ENCODE measurements at regions of chr1 and their contacts with region 1.

Region 1: DNA sequence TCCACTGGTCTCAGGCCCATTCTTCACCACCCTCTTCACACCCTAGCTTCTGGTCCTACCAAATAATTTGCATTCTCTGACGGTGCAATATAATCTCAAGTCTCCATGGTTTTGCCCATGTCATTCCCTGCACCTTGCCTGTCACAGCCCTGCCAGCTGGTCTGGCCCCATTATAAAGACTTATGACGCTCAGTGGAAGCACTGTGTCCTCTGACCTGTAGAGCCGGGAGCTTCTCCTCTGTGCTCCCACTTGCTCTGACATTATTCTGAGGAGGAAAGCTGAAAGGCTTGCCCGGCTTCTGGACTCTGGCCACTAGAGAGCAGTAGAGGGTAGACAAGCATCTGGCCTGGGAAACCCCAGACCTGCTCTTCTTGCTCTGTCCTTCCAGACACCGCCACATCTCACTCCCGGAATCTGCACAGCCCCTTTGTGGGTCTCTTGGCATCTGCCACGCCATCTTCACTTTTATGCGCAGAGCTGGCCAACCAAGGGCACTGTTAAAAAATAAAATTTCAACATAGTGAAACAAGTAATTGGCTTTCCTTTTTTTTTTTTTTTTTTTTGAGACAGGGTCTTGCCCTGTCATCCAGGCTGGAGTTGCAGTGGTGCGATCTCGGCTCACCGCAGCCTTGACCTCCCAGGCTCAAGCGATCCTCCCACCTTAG is 44.4 kb downstream of the NENF start:
- DNase-seq: peak; percentile 85 to 91
- H3K4me3 ChIP-seq: no peak overlapping the region
- H3K27ac ChIP-seq: no peak overlapping the region
- H3K4me1 ChIP-seq: peaks cover 0 to 28% (median 15%) of the 10 kb centered on the region in 4 donors
- H3K27me3 ChIP-seq: no peaks in the 10 kb centered on the region
- CTCF ChIP-seq: peak; percentile 83 to 89

Region 2: DNA sequence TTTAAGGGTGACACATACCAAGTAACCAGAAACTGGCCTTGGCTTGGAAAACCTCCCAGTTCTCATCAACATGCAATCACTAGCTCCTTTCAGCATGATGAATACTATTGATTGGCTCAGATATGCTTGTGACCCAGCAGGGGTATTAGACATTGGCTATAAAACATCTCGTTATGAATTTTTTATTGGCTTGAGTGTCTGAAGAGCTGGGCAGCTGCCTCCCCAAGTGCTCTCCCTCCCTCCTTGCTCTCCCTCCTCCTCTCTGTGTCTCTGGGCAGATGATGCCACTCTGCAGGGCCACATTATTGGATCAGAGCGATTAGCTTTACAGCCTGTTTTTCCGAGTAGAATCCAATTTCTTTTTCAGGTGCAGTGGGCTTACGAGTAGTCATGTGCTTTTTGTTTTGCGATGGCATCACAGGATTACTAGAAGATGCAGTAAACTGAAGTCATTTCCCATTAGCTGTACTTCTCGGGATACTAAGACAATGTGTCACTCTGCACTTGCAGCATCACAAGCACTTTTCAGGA is 52.1 kb after region 1 on chr1:
- intact Hi-C with region 1: no loop called
- DNase-seq: no peak
- H3K4me3 ChIP-seq: no peak overlapping the region
- H3K27ac ChIP-seq: no peak overlapping the region
- H3K4me1 ChIP-seq: no peaks in the 10 kb centered on the region
- H3K27me3 ChIP-seq: no peaks in the 10 kb centered on the region
- CTCF ChIP-seq: no peak

Region 3: GRCh38 chr1:212607206-212607912 is 130.2 kb after region 1 on chr1:
- intact Hi-C with region 1: loop called (anchors 10 kb)
- DNase-seq: peak; percentile 49 to 78
- H3K4me3 ChIP-seq: peak overlapping the region; percentile 65 to 84
- H3K27ac ChIP-seq: peak overlapping the region; percentile 91 to 99
- H3K4me1 ChIP-seq: peaks cover 0 to 56% (median 39%) of the 10 kb centered on the region in 4 donors
- H3K27me3 ChIP-seq: peaks cover 0 to 3% of the 10 kb centered on the region in 2 donors
- CTCF ChIP-seq: no peak

Region 4: DNA sequence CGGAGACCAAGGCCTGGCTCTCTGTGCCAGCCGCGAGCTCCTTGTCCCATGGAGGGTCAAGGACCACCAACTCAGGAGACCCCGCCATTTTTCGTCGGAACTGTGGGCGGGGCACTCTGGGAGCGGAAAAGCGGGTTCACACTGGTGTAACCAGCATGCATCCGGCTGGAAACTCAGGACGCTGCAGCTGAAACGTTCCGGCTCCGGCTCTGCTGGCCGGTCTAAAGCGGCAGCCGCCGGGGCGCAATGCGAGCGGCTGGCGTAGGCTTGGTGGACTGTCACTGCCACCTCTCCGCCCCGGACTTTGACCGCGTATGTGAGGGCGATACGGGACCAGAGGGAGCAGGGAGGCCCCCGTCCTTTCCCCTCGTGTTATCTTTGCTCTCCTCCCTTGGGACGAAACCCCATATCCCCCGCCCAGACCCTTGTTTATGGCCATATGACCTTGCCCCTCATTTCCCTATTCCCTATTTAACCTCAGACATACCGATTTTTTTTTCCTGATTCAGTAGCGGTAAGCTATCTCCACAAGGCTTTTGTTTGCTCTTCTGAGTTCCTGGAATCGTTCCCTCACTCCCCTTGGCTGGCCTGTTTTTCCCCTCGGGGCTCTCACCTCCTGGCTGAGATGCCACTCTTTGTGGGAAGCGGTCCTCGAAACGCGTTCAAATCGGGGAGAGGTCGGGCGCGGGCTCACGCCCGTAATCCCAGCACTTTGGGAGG is 314.7 kb after region 1 on chr1 and contains the starts of genes NSL1 and TATDN3:
- intact Hi-C with region 1: loop called (anchors 10 kb)
- DNase-seq: peak; percentile 79 to 92
- H3K4me3 ChIP-seq: peak within 1 kb of the TSS; percentile 74 to 95
- H3K27ac ChIP-seq: peak within 1 kb of the TSS; percentile 97 to 98
- H3K4me1 ChIP-seq: peaks cover 0 to 30% (median 14%) of the 10 kb centered on the region in 4 donors
- H3K27me3 ChIP-seq: no peaks in the 10 kb centered on the region
- CTCF ChIP-seq: no peak

Measured in tibial artery (tissue), 4 donors.